Left ventricle myocardium inferior (tissue), 1 donor: ENCODE measurements at regions of chrX and their contacts with region 1.

Region 1: GRCh38 chrX:85544609-85545008 is 165.1 kb upstream of the POF1B start:
- DNase-seq: no peak
- H3K4me3 ChIP-seq: no peak overlapping the region
- H3K27ac ChIP-seq: no peak overlapping the region
- H3K4me1 ChIP-seq: no peaks in the 10 kb centered on the region
- H3K27me3 ChIP-seq: no peaks in the 10 kb centered on the region
- CTCF ChIP-seq: peak; percentile 53

Region 2: GRCh38 chrX:85111347-85111746 is 433.3 kb before region 1 on chrX:
- intact Hi-C with region 1: loop called (anchors 10 kb)
- DNase-seq: no peak
- H3K4me3 ChIP-seq: no peak overlapping the region
- H3K27ac ChIP-seq: no peak overlapping the region
- H3K4me1 ChIP-seq: no peaks in the 10 kb centered on the region
- H3K27me3 ChIP-seq: no peaks in the 10 kb centered on the region
- CTCF ChIP-seq: peak; percentile 63

Region 3: GRCh38 chrX:85243761-85244449 is 300.7 kb before region 1 on chrX and contains the starts of genes SATL1 and ZNF711:
- intact Hi-C with region 1: no loop called
- DNase-seq: peak; percentile 17
- H3K4me3 ChIP-seq: peak within 1 kb of the TSS; percentile 67
- H3K27ac ChIP-seq: no peak within 1 kb of the TSS
- H3K4me1 ChIP-seq: no peaks in the 10 kb centered on the region
- H3K27me3 ChIP-seq: no peaks in the 10 kb centered on the region
- CTCF ChIP-seq: no peak
- total RNA-seq, gene SATL1: not detected
- total RNA-seq, gene ZNF711: 1.7 TPM